CD4-positive, alpha-beta memory T cell (primary cell): ENCODE measurements at regions of chr9 and their contacts with region 1.

Region 1: DNA sequence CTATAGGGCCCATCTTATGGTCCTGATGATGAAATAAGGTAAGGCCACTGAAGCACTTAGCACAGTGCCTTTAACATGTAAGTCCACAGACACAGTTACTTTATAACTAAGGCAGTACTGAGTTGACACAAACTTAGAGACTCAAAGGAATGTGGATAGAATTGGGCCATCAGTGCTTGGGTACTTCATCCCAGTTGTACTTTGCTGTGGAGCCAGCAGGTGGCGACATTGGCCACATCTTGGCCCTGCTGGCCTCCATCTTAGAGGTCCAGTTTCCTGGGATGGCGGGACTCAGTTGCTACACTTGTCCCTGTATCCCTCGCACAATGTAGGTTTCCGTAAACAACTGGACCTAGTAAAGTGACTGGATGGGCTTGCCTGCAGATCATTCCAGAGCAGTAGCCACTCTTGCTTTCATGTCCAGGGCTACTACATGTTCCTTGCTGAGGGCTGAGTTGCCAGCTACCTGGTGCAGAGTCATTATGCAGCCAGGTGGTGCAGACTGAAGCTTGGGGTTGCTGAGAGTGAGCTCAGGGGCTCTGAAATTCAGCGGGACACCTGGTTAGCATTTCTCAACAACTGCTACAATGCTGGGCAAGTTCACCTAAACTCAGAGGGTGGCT is 10.6 kb downstream of the MTAP start:
- DNase-seq: peak; percentile 59 to 71 (median 64)
- H3K4me3 ChIP-seq: no peak overlapping the region
- H3K4me3 Mint-ChIP-seq: peak overlapping the region in 2 of 8 donors; percentile 41 to 49
- H3K27ac ChIP-seq: no peak overlapping the region
- H3K27ac Mint-ChIP-seq: peak overlapping the region in 6 of 7 donors; percentile 58 to 85 (median 74)
- H3K4me1 ChIP-seq: peaks cover 14% of the 10 kb centered on the region
- H3K4me1 Mint-ChIP-seq: peaks cover 9 to 21% (median 16%) of the 10 kb centered on the region in 4 donors
- H3K27me3 ChIP-seq: no peaks in the 10 kb centered on the region
- H3K27me3 Mint-ChIP-seq: no peaks in the 10 kb centered on the region

Region 2: DNA sequence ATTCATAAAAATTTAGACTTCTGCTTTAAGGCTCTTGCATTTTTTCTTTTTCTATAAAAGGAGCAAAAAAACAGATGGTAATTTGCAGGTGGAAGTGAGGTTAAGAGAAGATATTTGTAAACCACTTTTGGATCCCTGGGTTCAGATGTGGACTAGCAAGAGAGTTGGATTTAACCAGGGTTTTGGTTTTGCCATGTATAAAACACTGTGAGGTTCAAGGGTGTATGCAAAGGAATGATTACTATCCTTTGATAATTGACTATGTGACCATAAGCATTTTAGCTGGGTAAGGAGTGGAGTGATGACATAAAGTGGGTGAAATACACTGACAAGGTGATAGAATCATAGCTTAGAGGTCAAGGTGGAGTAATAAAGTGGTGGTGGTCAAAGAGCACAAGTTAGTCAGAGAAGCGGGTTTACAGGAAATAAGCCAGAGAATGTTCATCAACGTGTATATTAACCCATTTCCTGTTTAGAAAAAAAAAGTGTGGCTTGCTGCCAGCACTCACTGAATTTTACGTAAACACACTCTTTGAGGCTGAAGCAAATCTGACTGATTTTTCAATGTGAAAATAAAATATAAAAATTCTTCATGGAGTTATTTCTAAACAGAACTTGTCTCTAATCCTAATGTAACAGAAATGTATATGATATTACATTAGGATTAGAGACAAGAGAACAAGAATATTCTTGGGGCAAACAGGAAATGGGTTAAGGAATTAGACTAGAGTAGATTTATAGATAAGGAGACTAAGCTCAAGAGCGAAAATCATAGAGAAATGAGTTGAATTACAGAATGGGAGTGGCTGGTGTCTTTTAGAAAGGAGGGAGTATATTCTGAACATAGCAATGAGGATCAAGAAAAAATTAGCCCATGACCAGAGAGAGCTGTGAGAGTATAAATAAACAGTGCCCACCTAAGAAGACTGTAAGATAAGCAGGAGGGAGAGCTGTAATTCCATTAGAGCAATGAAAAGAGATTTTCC is 106.6 kb after region 1 on chr9:
- CTCF ChIA-PET with region 1: interaction called, 4 read pairs
- POLR2A ChIA-PET with region 1: no interaction called
- intact Hi-C with region 1: loop called (anchors 5 kb)
- DNase-seq: peak; percentile 51 to 79 (median 75)
- H3K4me3 ChIP-seq: peak overlapping the region in 1 of 2 donors; percentile 22
- H3K4me3 Mint-ChIP-seq: peak overlapping the region; percentile 4 to 76 (median 63)
- H3K27ac ChIP-seq: no peak overlapping the region
- H3K27ac Mint-ChIP-seq: peak overlapping the region; percentile 58 to 96 (median 85)
- H3K4me1 ChIP-seq: peaks cover 31% of the 10 kb centered on the region
- H3K4me1 Mint-ChIP-seq: peaks cover 21 to 43% (median 35%) of the 10 kb centered on the region in 4 donors
- H3K27me3 ChIP-seq: no peaks in the 10 kb centered on the region
- H3K27me3 Mint-ChIP-seq: no peaks in the 10 kb centered on the region

Region 3: DNA sequence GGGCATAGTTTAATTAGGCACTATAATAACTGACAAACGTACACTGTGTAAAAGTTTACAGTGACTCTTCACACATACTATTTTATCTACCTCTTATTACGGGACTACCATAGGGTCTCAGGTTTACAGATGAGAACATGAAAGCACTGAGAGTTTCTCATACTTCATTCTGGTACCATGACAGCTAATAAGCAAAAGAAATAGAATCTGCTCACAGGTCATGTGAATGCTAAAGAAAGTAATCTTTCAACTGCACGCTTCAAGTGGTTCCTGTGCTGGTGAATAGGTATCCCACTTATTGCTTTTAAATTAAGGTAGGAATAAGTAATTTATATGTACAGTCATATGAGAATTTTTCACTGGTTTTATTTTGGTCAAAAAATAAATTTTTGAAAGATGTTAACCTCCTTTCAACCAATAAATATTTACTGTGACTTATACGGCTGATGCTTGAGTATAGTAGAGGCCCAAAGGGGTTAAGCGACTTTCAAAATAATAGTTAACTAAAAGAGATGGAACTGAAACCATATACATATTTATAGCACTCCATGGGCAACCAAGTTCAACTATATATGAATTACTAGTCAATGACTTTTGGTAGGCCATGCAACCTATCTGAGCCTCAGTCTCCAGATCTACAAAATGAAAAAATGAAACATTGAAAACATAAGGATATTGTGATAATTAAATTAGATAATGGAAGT is 173.1 kb after region 1 on chr9:
- CTCF ChIA-PET with region 1: interaction called, 10 read pairs
- POLR2A ChIA-PET with region 1: no interaction called
- intact Hi-C with region 1: no loop called
- DNase-seq: no peak
- H3K4me3 ChIP-seq: no peak overlapping the region
- H3K4me3 Mint-ChIP-seq: no peak overlapping the region
- H3K27ac ChIP-seq: no peak overlapping the region
- H3K27ac Mint-ChIP-seq: no peak overlapping the region
- H3K4me1 ChIP-seq: no peaks in the 10 kb centered on the region
- H3K4me1 Mint-ChIP-seq: peaks cover 0 to 5% (median 4%) of the 10 kb centered on the region in 4 donors
- H3K27me3 ChIP-seq: peaks cover 4% of the 10 kb centered on the region
- H3K27me3 Mint-ChIP-seq: peaks cover 29 to 30% of the 10 kb centered on the region in 2 donors

Region 4: GRCh38 chr9:22002038-22002437 is 189.0 kb after region 1 on chr9:
- CTCF ChIA-PET with region 1: interaction called, 355 read pairs
- POLR2A ChIA-PET with region 1: interaction called, 23 read pairs
- intact Hi-C with region 1: no loop called
- DNase-seq: no peak
- H3K4me3 ChIP-seq: no peak overlapping the region
- H3K4me3 Mint-ChIP-seq: no peak overlapping the region
- H3K27ac ChIP-seq: no peak overlapping the region
- H3K27ac Mint-ChIP-seq: no peak overlapping the region
- H3K4me1 ChIP-seq: peaks cover 11% of the 10 kb centered on the region
- H3K4me1 Mint-ChIP-seq: peaks cover 7 to 12% (median 10%) of the 10 kb centered on the region in 4 donors
- H3K27me3 ChIP-seq: peaks cover 33% of the 10 kb centered on the region
- H3K27me3 Mint-ChIP-seq: peaks cover 33 to 34% of the 10 kb centered on the region in 2 donors

Region 5: GRCh38 chr9:22119537-22120158 is 306.6 kb after region 1 on chr9:
- CTCF ChIA-PET with region 1: interaction called, 44 read pairs
- POLR2A ChIA-PET with region 1: interaction called, 3 read pairs
- intact Hi-C with region 1: loop called (anchors 1 kb)
- DNase-seq: peak; percentile 8 to 36 (median 26)
- H3K4me3 ChIP-seq: no peak overlapping the region
- H3K4me3 Mint-ChIP-seq: no peak overlapping the region
- H3K27ac ChIP-seq: no peak overlapping the region
- H3K27ac Mint-ChIP-seq: no peak overlapping the region
- H3K4me1 ChIP-seq: peaks cover 6% of the 10 kb centered on the region
- H3K4me1 Mint-ChIP-seq: peaks cover 0 to 4% (median under 1%) of the 10 kb centered on the region in 4 donors
- H3K27me3 ChIP-seq: no peaks in the 10 kb centered on the region
- H3K27me3 Mint-ChIP-seq: peaks cover 0 to 4% of the 10 kb centered on the region in 2 donors

Region 6: DNA sequence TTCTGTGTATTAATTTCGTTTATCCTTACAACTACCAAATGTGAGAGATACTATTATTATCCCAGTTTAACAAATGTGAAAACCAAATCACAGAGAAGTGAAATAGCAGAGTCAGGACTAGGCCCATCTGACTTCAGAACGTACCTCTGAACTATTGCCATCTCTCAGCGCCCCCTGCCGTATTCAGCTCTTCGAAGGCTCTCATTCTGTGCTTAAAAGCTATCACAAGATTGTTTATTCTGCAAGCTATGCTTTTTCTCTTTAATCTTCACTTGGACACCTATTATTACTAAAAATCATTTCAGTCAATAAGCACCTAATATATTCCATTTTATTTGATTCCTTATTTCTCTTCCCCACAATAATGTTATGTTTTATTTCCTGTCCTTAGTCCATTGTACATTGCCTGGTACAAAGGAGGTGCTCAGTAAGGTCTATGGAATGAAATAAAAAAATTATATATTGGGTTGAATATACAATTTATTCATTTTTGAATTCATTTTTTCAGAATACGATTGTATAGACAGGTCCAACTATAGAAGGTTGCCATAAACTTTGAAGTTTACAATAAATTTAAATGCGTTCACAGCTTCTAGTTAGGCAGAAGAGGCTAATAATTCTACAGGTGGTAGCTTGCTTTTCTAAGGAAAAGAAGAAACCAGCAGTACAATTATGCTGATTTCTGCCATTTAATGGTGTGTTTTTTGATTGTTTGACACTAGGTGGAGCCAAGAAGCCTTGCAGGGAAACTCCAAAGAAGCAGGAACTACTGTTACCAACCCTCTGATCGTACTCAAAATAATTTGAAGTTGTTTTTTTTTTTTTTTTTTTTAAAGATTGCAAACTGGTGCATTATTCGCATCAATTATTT is 431.3 kb after region 1 on chr9:
- CTCF ChIA-PET with region 1: interaction called, 23 read pairs
- POLR2A ChIA-PET with region 1: no interaction called
- intact Hi-C with region 1: loop called (anchors 1 kb)
- DNase-seq: peak in 4 of 5 donors; percentile 16 to 30 (median 26)
- H3K4me3 ChIP-seq: no peak overlapping the region
- H3K4me3 Mint-ChIP-seq: peak overlapping the region in 3 of 8 donors; percentile 17 to 35 (median 25)
- H3K27ac ChIP-seq: no peak overlapping the region
- H3K27ac Mint-ChIP-seq: no peak overlapping the region
- H3K4me1 ChIP-seq: no peaks in the 10 kb centered on the region
- H3K4me1 Mint-ChIP-seq: peaks cover 2 to 10% (median 6%) of the 10 kb centered on the region in 4 donors
- H3K27me3 ChIP-seq: no peaks in the 10 kb centered on the region
- H3K27me3 Mint-ChIP-seq: peaks cover 1 to 3% of the 10 kb centered on the region in 2 donors